Sigmoid colon (tissue), 7 donors: ENCODE measurements at regions of chr5 and their contacts with region 1.

Region 1: DNA sequence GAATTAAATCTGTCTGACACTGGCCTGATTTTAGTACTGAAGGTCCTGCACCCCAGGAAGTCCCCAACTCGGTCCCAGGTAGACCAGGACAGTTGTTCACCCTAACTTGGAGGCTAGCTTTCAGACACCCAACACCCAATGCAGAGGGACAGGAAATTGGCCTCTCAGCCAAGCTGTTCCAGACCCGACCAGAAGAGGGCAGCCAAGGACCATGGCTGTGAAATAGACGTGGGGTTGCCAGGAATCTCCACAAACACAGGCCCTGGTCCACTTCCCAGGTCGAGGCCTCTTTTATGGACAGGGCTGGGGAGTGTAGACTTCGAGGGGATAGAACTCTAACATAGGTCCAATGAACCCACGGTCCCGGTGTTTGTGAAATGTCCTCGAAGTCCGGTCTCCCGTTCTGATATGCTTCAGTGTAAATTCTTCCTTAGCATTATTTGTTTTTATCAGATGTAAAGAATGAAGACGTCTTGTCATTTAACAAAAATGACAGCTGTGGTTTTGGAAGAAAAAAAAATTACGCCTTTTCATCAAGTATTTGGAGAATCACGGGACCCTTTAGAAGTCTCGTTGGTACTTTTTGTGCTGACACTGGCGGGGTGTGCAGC is 260.3 kb upstream of the ADAMTS16 start:
- DNase-seq: peak; percentile 92
- H3K4me3 ChIP-seq: no peak overlapping the region
- H3K27ac ChIP-seq: no peak overlapping the region
- H3K4me1 ChIP-seq: peaks cover 0 to 6% (median 0%) of the 10 kb centered on the region in 4 donors
- H3K27me3 ChIP-seq: peaks cover 0 to 2% (median 0%) of the 10 kb centered on the region in 3 donors
- CTCF ChIP-seq: peak; percentile 90 to 98 (median 94)
- EP300 ChIP-seq: no peak
- POLR2A ChIP-seq: no peak

Region 2: GRCh38 chr5:4941957-4942830 is 62.4 kb after region 1 on chr5:
- intact Hi-C with region 1: loop called (anchors 1 kb)
- DNase-seq: no peak
- H3K4me3 ChIP-seq: no peak overlapping the region
- H3K27ac ChIP-seq: no peak overlapping the region
- H3K4me1 ChIP-seq: peaks cover 0 to 4% (median 1%) of the 10 kb centered on the region in 4 donors
- H3K27me3 ChIP-seq: no peaks in the 10 kb centered on the region
- CTCF ChIP-seq: peak; percentile 55 to 96 (median 84)
- EP300 ChIP-seq: no peak
- POLR2A ChIP-seq: no peak

Region 3: DNA sequence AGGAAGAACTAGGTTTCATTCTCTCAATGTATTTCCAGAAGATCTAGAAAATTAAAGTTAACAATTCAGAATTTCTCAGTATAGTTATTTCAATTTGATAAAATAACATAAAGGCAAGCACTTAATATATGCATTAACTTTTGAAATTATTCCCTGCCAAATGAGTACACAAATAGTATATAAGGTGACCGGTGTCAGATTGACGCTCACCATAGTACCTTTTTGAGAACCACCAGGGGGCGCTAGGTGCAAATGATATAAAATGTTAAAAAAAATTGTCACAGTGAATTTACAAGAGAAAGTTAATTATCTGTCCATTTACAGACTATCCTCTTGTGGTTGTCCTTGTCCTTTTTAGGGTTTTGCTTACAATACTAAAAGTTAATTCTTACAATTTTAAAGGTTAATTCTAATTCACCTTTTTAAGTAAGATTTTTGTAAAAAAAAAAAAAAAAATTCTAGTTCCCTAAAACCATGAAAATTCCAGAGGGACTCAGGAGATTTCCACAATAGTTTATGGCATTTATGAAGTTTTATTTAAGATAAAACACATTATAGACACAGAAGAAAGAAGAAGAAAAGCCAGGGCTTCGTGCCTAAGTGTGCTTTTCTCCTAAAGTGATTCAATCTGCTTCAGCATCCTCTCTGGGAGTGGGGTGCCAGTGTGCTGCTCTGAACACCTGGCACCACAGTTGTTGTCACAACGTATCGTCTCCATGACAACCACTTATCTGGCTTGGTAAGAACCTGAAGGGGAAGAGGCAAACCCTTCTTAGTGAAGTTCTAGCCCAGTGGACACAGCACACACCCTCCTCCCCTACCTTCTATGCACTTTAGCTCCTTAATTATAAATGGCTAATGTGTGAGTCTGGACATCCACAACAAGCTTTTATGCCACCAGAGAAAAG is 262.1 kb after region 1 on chr5:
- intact Hi-C with region 1: loop called (anchors 5 kb)
- DNase-seq: peak; percentile 65
- H3K4me3 ChIP-seq: peak overlapping the region in 2 of 4 donors; percentile 33 to 39
- H3K27ac ChIP-seq: no peak overlapping the region
- H3K4me1 ChIP-seq: peaks cover 0 to 22% (median 21%) of the 10 kb centered on the region in 4 donors
- H3K27me3 ChIP-seq: peaks cover 13 to 44% (median 22%) of the 10 kb centered on the region in 3 donors
- CTCF ChIP-seq: peak in 2 of 4 experiments; percentile 38 to 72
- EP300 ChIP-seq: no peak
- POLR2A ChIP-seq: no peak